ENCODE measurements at regions of chr1 and their contacts with region 1.

Region 1: DNA sequence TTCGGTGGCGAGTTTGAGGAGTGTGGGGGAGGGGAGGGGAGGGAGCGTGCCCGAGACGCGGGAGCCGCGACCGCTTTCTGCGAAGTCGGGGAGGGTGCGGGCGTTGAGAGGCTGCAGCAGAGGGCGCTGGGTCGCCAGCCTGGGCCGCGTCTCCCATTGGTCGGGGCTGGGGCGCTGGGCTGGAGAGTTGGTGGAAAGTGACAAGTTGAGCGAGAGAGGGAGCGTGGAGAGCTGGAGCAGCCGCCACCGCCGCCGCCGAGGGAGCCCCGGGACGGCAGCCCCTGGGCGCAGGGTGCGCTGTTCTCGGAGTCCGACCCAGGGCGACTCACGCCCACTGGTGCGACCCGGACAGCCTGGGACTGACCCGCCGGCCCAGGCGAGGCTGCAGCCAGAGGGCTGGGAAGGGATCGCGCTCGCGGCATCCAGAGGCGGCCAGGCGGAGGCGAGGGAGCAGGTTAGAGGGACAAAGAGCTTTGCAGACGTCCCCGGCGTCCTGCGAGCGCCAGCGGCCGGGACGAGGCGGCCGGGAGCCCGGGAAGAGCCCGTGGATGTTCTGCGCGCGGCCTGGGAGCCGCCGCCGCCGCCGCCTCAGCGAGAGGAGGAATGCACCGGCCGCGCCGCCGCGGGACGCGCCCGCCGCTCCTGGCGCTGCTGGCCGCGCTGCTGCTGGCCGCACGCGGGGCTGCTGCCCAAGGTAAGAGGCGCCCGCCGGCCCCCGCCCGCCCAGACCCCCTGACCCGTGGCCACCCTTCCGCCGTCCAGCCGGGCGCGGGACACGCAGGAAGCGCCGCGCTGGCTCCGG is at the start of gene ROR1:
- DNase-seq: peak; percentile 52 to 95
- H3K4me3 ChIP-seq: peak within 1 kb of the TSS; percentile 77 to 92
- H3K27ac ChIP-seq: peak within 1 kb of the TSS; percentile 96 to 99
- H3K4me1 ChIP-seq: peaks cover 0 to 11% of the 10 kb centered on the region in 2 donors
- H3K27me3 ChIP-seq: no peaks in the 10 kb centered on the region
- CTCF ChIP-seq: peak; percentile 80 to 87 (median 84)
- total RNA-seq, gene ROR1: 115 TPM

Region 2: DNA sequence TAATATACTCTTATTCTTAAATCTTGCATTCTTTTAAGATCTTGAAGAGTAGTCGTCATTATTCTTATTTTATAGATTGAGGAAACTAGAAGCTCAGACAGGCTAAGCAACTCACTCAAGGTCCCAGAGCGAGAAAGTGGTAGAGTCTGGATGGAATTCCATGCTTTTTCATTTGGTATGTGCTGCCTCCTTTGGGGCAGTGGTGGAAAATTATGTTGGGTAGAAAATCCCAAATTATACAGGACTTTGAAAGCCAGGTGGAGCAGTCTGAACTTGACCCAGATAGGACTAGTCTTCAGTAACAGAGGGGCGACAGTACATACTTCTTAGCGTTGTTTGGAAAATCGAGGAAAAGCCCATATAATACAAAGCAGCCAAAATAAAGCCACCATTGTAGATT is 784.5 kb before region 1 on chr1:
- intact Hi-C with region 1: no loop called
- DNase-seq: no peak
- H3K4me3 ChIP-seq: no peak overlapping the region
- H3K27ac ChIP-seq: no peak overlapping the region
- H3K4me1 ChIP-seq: no peaks in the 10 kb centered on the region
- H3K27me3 ChIP-seq: no peaks in the 10 kb centered on the region
- CTCF ChIP-seq: no peak

Region 3: DNA sequence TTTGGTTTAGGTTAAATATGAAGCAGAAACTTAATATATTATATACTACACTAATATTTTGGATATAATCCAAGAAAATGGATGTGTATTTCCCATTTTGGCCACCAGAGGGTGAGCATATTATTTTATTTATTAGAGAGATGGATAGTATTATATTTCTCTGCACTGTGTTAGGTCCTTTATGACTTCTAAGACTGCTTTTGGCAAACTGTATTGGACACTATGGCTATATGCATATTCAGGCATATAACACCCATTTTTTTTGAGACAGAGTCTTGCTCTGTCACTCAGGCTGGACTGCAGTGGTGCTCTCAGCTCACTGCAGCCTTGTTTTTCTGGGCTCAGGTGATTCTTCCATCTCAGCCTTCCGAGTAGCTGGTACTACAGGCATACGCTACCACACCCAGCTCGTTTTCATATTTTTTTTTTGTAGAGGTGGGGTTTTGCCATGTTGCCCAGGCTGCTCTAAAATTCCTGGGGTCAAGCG is 198.6 kb before region 1 on chr1:
- intact Hi-C with region 1: no loop called
- DNase-seq: no peak
- H3K4me3 ChIP-seq: no peak overlapping the region
- H3K27ac ChIP-seq: no peak overlapping the region
- H3K4me1 ChIP-seq: no peaks in the 10 kb centered on the region
- H3K27me3 ChIP-seq: no peaks in the 10 kb centered on the region
- CTCF ChIP-seq: peak; percentile 50 to 78 (median 74)

Region 4: DNA sequence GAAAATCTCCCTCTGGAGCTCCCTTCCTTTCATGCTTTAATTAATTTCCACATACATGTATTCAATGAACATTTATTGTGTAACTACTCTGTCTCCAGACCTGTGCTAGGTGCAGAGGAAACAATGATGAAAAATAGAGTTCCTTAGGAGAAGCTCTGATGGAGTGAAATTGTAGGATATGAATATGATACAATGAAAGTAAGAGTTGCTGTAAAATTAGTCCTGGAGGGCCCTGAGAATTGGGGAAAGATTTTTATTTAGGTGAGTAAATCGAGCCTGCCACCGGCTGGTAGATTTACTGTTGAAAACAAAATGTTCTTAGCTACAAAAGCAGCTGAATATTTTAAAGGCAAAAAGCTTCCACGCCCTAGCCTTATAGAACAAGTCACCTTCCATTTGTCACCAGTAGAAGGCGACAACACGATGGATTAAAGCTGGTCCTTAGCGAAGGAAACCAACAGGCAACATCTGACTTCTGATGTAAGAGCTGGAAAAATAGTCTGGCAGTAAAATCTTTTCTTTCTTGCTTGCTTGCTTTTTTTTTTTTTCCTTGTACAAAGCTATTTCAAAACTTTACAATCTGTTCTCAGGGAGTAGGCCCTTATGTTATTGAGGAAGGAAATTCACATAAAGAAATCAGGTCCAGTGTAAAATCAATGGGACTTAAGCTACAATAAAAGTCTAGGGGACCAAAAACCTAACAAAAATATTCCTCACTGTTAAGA is 82.2 kb before region 1 on chr1:
- intact Hi-C with region 1: loop called (anchors 1 kb)
- DNase-seq: peak in 1 of 2 donors; percentile 86
- H3K4me3 ChIP-seq: no peak overlapping the region
- H3K27ac ChIP-seq: peak overlapping the region; percentile 61 to 62
- H3K4me1 ChIP-seq: peaks cover 5 to 12% of the 10 kb centered on the region in 2 donors
- H3K27me3 ChIP-seq: no peaks in the 10 kb centered on the region
- CTCF ChIP-seq: peak; percentile 82 to 84 (median 82)

Region 5: DNA sequence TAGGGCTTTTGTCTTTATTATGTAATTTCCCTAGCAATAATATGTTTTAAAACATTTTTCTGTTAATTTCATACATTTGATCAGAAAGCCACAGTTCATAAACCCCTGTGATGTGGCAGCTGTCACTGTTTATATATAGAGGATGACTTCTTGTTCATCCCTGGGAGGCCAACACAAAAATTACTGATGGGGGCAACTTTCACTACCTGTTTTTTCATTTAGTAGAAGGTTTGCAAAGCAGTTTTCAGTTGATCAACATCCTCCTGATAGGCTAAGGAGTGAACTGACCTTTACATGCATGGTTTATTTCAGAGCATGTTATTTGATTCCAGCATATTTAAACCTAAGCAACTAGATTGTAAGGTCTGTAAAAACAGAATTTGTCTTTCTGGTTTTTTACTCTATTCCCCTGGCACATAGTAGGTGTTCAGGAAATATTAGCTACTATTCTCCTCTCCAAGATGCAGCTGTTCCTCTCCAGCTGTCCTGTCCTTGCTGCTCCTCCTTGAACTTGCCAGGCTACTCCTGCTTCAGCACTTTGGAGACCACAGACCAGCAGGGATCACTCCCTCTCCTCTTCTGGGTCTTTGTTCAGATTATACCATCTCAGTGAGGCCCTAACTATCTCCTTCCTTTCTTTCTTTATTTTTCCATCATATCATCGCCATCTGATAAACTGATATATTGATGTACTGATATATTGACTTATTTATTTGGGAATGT is 54.5 kb after region 1 on chr1:
- intact Hi-C with region 1: no loop called
- DNase-seq: no peak
- H3K4me3 ChIP-seq: no peak overlapping the region
- H3K27ac ChIP-seq: peak overlapping the region; percentile 20 to 80
- H3K4me1 ChIP-seq: peaks cover 0 to 47% of the 10 kb centered on the region in 2 donors
- H3K27me3 ChIP-seq: no peaks in the 10 kb centered on the region
- CTCF ChIP-seq: no peak

Region 6: GRCh38 chr1:63917571-63918417 is 143.8 kb after region 1 on chr1:
- intact Hi-C with region 1: loop called (anchors 2 kb)
- DNase-seq: peak in 1 of 2 donors; percentile 74
- H3K4me3 ChIP-seq: peak overlapping the region in 1 of 2 donors; percentile 32
- H3K27ac ChIP-seq: peak overlapping the region; percentile 72 to 85
- H3K4me1 ChIP-seq: peaks cover 2 to 44% of the 10 kb centered on the region in 2 donors
- H3K27me3 ChIP-seq: no peaks in the 10 kb centered on the region
- CTCF ChIP-seq: peak in 2 of 3 experiments; percentile 7 to 37

Region 7: DNA sequence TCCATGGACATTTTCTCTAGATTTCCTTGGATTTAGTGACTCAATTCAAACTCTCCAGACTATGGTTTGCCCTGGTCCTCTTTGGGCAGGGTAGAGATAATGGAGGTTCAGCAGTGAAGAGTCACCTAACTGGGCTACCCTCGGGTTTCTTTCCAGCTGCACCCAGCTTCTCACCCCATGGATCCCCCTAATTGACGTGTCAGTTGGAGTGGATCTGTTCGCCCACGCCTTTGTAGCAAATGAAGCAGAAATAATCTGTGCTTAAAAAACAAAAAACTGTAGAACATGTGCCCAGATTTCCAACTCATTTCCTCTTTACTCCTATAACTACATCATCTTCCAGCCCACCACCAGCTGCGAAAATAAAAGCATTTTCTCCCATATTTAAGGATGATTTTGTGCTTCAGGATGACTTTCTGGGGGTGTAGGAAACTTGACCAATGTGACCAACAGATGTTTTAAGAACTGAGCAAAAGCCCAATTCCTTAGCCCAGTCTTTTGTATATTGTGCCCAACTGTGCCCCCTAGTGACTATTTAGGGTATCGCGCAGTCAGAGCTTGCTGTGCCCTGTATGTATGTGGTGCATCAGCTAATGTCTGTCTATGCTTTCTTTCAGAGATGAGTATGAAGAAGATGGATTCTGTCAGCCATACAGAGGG is 362.9 kb after region 1 on chr1:
- intact Hi-C with region 1: loop called (anchors 1 kb)
- DNase-seq: peak; percentile 23 to 90
- H3K4me3 ChIP-seq: no peak overlapping the region
- H3K27ac ChIP-seq: peak overlapping the region; percentile 37 to 64
- H3K4me1 ChIP-seq: peaks cover 4 to 42% of the 10 kb centered on the region in 2 donors
- H3K27me3 ChIP-seq: no peaks in the 10 kb centered on the region
- CTCF ChIP-seq: peak; percentile 83 to 90 (median 88)

Region 8: DNA sequence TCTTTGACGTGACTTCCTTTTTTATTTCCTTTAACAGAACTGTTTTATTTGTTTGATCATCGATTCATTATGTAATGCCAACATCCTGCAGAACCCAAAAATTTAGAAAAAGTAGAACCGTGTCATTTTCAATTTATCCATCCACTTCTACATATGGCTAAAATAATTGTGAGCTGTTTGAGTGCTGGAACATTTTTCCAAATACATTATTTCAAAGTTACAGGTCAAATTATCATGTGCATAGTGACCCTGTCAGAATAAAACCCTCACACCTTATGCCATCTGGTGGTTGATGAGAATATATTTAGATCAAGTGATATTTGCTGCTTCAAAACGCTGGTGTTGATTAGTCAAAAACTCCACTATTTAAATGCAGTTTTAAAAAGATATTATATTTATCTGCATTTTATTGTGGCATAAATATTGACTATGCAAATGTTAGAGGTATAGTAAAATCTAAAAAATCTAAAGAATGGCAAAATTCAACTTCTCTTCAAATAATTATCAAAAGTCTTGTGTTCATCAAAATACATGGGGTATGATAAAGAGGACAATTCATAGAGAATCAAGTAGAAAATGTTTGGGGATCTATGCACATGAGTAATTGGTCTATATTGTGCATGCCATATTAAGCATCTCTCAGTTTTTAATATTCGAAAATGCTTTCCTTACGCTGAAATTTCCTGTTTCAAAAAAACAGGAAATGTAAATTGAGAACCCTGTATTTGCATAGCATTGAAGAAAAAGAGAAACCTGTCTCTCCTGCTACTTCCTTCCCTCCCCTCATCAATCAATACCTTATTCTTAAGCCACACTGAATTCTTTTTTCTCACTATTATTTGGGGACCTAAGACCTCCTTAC is 469.1 kb after region 1 on chr1:
- intact Hi-C with region 1: loop called (anchors 2 kb)
- DNase-seq: no peak
- H3K4me3 ChIP-seq: peak overlapping the region in 1 of 2 donors; percentile 4
- H3K27ac ChIP-seq: no peak overlapping the region
- H3K4me1 ChIP-seq: peaks cover 0 to 7% of the 10 kb centered on the region in 2 donors
- H3K27me3 ChIP-seq: no peaks in the 10 kb centered on the region
- CTCF ChIP-seq: peak; percentile 43 to 58 (median 44)

Measured in ascending aorta (tissue), 2 donors.